ENCODE measurements at regions of chr21 and their contacts with region 1.

Region 1: GRCh38 chr21:29148530-29148929 is 18.1 kb downstream of the MAP3K7CL start:
- DNase-seq: no peak
- ATAC-seq: peak; percentile 93
- H3K4me3 ChIP-seq: no peak overlapping the region
- H3K27ac ChIP-seq: no peak overlapping the region
- H3K4me1 ChIP-seq: no peaks in the 10 kb centered on the region
- H3K27me3 ChIP-seq: no peaks in the 10 kb centered on the region
- CTCF ChIP-seq: no peak
- EP300 ChIP-seq: no peak
- POLR2A ChIP-seq: no peak
- RAD21 ChIP-seq: no peak

Region 2: DNA sequence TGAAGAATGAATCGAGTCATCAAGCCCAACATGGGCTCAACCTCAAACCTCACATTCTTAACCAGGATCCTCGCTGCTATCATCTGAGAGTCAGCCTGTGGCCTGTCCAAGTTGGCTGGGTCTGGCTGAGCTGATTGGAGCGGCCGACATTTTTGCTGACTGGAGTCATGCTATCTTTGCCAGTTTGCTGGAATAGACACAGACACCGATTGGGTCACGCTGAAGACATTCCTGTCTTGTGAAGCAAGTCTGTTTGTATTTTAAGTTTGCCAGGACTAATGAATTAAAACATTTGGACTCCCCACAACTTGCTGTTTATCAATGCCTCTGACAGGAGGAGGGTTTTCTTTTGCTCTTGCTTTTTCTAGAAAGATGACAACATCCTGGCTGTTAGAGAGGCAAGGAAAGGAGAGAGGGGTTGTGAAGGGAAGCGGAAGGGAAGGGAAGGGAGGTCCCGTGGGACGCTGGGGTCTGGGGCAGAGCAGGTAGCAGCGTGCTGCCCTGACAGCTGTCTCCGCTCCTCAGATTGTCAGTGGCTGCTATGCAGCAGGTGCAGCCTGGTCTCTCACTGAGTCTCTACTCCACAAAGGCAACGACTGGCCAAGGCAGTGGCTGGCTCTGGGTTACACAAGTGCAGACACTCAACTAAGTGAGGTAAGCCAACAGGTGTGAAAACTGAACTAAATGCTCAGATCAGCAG is 18.1 kb before region 1 on chr21 and contains the start of gene MAP3K7CL:
- CTCF ChIA-PET with region 1: interaction called, 5 read pairs
- POLR2A ChIA-PET with region 1: interaction called, 6 read pairs
- RAD21 ChIA-PET with region 1: interaction called, 7 read pairs
- SMC1A ChIA-PET with region 1: interaction called, 11 read pairs
- in situ Hi-C with region 1: no loop called
- intact Hi-C with region 1: no loop called
- DNase-seq: no peak
- ATAC-seq: peak; percentile 85
- H3K4me3 ChIP-seq: no peak within 1 kb of the TSS
- H3K27ac ChIP-seq: no peak within 1 kb of the TSS
- H3K4me1 ChIP-seq: peaks cover 11% of the 10 kb centered on the region
- H3K27me3 ChIP-seq: no peaks in the 10 kb centered on the region
- CTCF ChIP-seq: no peak
- EP300 ChIP-seq: 0 out of 4 replicates have a peak, but pooled peaks of 1 of the 2 experiments have one; percentile 28
- POLR2A ChIP-seq: no peak
- RAD21 ChIP-seq: no peak
- polyA plus RNA-seq, gene MAP3K7CL: 13.1 to 19.7 TPM

Measured in GM12878 (cell line).